Ascending aorta (tissue), 2 donors: ENCODE measurements at regions of chr10 and their contacts with region 1.

Region 1: DNA sequence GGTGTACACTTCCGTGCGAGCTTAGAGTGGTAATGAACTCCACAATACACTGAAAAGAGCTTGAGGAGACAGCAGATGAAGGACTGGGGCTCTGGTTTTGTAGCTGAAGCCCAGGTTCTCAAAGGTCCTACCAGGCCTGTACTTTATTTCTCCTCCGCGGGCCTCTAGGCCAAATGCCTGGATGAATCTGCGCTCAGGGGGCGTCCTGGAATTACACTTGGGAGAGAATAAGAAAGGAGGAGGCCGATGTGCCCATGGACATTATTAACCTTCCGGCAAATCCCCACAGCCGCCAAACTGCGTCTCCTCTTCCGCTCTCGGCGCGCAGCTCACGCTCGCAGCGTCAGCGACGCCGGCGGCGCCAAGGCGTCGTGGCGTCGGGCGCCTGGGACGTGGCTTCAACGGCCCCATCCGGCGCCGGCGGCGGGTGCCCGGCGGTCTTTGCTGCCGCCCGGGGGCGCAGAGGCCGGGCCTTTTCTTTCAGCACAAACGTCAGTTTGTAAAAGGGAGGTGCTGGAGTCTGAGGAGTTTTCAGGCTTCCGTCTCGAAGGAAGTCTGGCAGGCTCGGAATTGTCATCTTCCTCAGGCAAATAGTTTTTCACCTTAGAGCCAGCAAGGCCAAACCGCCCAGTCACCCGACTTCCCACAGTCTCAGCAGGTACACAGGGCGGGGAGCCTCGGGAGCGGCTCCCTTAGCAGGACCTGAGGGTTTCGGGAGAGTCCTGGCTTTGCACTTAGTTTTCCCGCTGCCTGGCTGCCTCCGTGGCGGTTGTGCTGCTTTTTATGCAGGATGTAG is at the start of gene CCDC7:
- DNase-seq: peak; percentile 29 to 92
- H3K4me3 ChIP-seq: peak within 1 kb of the TSS; percentile 85 to 86
- H3K27ac ChIP-seq: peak within 1 kb of the TSS; percentile 98 to 99
- H3K4me1 ChIP-seq: peaks cover 0 to 12% of the 10 kb centered on the region in 2 donors
- H3K27me3 ChIP-seq: no peaks in the 10 kb centered on the region
- CTCF ChIP-seq: peak; percentile 24 to 47 (median 41)
- total RNA-seq, gene CCDC7: 56.9 TPM

Region 2: GRCh38 chr10:32308027-32308603 is 137.8 kb before region 1 on chr10:
- intact Hi-C with region 1: no loop called
- DNase-seq: no peak
- H3K4me3 ChIP-seq: no peak overlapping the region
- H3K27ac ChIP-seq: no peak overlapping the region
- H3K4me1 ChIP-seq: peaks cover 0 to under 1% of the 10 kb centered on the region in 2 donors
- H3K27me3 ChIP-seq: no peaks in the 10 kb centered on the region
- CTCF ChIP-seq: no peak

Region 3: DNA sequence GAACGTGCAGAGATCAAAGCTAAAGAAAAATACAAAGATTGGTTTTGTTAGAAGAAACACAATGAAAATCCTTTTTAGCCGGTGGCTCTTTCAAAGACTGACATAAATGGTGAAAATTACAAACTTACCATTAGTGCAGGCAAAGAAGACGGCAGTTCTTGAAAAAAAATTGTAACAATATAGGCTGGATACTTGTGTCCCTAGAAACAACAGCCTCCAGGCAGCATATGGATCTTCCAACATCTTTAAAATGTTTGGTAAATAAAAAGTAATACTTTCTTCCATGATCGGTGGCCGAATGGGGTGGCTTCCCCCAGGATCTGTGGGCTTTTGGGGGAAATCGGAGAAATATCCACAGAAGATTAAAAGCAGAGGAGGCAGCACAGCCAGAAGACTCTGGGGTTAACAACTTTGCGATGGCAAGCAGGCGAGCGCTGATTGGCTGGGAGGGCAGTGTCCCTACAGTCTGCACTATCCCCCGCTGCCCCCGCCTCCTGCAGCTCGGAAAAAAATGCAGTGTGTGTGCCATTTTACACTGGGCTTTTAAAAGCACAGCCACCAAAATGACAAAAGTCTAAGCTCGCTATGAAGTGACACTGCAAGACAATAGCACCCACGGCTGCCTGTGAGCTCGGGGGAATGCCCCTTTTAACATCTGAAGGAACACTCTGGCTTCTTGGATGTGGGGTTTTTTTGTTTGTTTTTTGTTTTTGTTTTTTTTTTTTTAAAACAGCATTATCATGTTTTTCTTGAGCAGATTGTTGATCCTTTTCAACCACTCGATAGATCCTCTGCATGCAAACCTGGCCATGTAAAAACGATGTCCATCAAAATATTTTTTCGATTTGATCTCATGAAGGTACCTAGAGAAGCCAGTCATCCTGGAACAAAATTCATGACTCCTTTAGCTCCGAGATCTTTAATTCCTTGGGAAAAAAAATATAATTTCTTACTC is 67.3 kb before region 1 on chr10:
- intact Hi-C with region 1: loop called (anchors 2 kb)
- DNase-seq: peak; percentile 85 to 96
- H3K4me3 ChIP-seq: peak overlapping the region; percentile 70 to 87
- H3K27ac ChIP-seq: peak overlapping the region; percentile 63 to 82
- H3K4me1 ChIP-seq: peaks cover 0 to 10% of the 10 kb centered on the region in 2 donors
- H3K27me3 ChIP-seq: no peaks in the 10 kb centered on the region
- CTCF ChIP-seq: no peak

Region 4: GRCh38 chr10:32415361-32415760 is 30.6 kb before region 1 on chr10:
- intact Hi-C with region 1: loop called (anchors 2 kb)
- DNase-seq: no peak
- H3K4me3 ChIP-seq: no peak overlapping the region
- H3K27ac ChIP-seq: no peak overlapping the region
- H3K4me1 ChIP-seq: peaks cover 0 to 19% of the 10 kb centered on the region in 2 donors
- H3K27me3 ChIP-seq: no peaks in the 10 kb centered on the region
- CTCF ChIP-seq: no peak